ENCODE measurements at regions of chr14 and their contacts with region 1.

Region 1: DNA sequence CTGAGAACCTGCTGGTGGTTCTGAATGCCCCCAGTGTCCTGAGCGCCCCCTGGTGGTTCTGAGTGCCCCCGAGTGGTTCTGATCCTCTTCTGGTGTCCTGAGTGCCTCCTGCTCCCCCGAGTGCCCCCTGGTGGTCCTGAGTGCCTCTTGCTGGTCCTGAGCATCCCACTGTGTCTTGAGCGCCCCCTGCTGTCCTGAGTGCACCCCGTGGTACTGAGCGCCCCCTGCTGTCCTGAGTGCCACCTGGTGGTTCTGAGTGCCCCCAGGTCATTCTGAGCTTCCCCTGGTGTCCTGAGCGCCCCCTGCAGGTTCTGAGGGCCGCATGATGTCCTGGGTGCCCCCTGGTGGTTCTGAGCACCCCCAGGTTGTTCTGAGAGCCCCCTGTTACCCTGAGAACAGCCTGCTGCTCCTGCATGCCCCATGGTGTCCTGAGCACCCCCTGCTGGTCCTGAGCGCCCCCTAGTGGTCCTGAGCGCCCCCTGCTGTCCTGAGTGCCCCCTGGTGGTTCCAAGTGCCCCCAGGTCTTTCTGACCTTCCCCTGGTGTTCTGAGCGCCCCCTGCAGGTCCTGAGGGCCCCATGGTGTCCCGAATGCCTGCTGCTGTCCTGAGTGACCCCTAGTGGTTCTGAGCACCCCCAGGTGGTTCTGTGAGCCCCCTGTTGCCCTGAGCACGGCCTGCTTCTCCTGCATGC is 1165.4 kb downstream of the TMEM121 start:
- DNase-seq: peak; percentile 79
- ATAC-seq: peak; percentile 88
- H3K4me3 ChIP-seq: no peak overlapping the region
- H3K27ac ChIP-seq: no peak overlapping the region
- H3K4me1 ChIP-seq: peaks cover 6% of the 10 kb centered on the region
- H3K27me3 ChIP-seq: peaks cover 0 to 4% of the 10 kb centered on the region in 2 experiments; a peak in 1 of 4 replicates
- CTCF ChIP-seq: peak; percentile 91 to 100 (median 100)
- EP300 ChIP-seq: no peak
- POLR2A ChIP-seq: no peak
- RAD21 ChIP-seq: peak; percentile 55; the same call in 1 of the 2 replicates

Region 2: GRCh38 chr14:106631879-106632278 is 59.9 kb before region 1 on chr14:
- CTCF ChIA-PET with region 1: no interaction called
- POLR2A ChIA-PET with region 1: no interaction called
- RAD21 ChIA-PET with region 1: no interaction called
- SMC1A ChIA-PET with region 1: no interaction called
- in situ Hi-C with region 1: no loop called
- intact Hi-C with region 1: no loop called
- DNase-seq: no peak
- ATAC-seq: no peak
- H3K4me3 ChIP-seq: no peak overlapping the region
- H3K27ac ChIP-seq: no peak overlapping the region
- H3K4me1 ChIP-seq: no peaks in the 10 kb centered on the region
- H3K27me3 ChIP-seq: no peaks in the 10 kb centered on the region; a peak in 2 of 4 replicates
- CTCF ChIP-seq: no peak
- EP300 ChIP-seq: no peak
- POLR2A ChIP-seq: no peak
- RAD21 ChIP-seq: no peak

Region 3: DNA sequence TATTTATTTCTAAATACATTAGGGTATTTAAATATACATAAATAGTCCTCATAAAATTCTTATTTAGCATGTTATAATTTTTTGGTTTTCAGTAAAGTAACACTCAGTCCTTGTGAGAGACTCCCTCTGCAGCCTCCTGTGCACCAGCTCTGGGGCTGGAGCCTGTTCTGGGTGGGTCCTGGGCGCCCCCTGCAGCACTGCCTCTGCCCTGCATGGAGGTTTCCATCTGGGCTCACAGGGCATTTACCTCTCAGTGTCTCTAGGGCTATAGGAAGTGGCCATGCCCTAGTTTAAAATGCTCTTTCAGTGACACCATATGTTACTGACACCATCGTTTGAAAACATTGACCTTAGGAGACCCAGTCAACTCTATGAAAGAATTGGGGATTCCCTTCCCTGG is 10.2 kb before region 1 on chr14:
- CTCF ChIA-PET with region 1: interaction called, 53 read pairs
- POLR2A ChIA-PET with region 1: no interaction called
- RAD21 ChIA-PET with region 1: no interaction called
- SMC1A ChIA-PET with region 1: no interaction called
- in situ Hi-C with region 1: no loop called
- intact Hi-C with region 1: no loop called
- DNase-seq: no peak
- ATAC-seq: peak; percentile 99
- H3K4me3 ChIP-seq: no peak overlapping the region
- H3K27ac ChIP-seq: no peak overlapping the region
- H3K4me1 ChIP-seq: no peaks in the 10 kb centered on the region
- H3K27me3 ChIP-seq: peaks cover 0 to 5% of the 10 kb centered on the region in 2 experiments; a peak in 2 of 4 replicates
- CTCF ChIP-seq: peak; percentile 13 to 44 (median 44); a peak in 5 of 6 replicates
- EP300 ChIP-seq: no peak
- POLR2A ChIP-seq: no peak
- RAD21 ChIP-seq: no peak

Region 4: GRCh38 chr14:106729551-106729950 is 37.8 kb after region 1 on chr14:
- CTCF ChIA-PET with region 1: no interaction called
- POLR2A ChIA-PET with region 1: no interaction called
- RAD21 ChIA-PET with region 1: no interaction called
- SMC1A ChIA-PET with region 1: no interaction called
- in situ Hi-C with region 1: no loop called
- intact Hi-C with region 1: no loop called
- DNase-seq: no peak
- ATAC-seq: no peak
- H3K4me3 ChIP-seq: no peak overlapping the region
- H3K27ac ChIP-seq: no peak overlapping the region
- H3K4me1 ChIP-seq: no peaks in the 10 kb centered on the region
- H3K27me3 ChIP-seq: no peaks in the 10 kb centered on the region
- CTCF ChIP-seq: no peak
- EP300 ChIP-seq: no peak
- POLR2A ChIP-seq: no peak
- RAD21 ChIP-seq: no peak

Region 5: DNA sequence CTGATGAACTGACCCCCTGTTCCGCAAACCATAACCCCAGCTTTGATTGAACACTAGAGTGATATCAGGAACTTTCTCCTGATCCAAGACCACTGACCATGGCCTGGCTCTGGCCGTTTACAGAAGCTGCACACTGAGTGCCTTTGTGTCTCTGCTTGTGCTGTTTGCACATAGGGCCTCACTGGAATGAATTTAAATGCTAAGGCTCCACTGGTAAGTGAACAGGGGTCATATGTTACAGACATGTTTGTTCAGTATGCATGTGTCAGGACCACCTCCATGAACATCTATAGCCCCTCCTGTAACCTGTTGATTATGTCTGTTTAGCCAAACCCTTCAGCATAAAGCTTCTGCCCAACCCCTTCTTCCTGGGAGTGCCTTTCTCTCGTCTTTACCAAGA is 74.4 kb after region 1 on chr14:
- CTCF ChIA-PET with region 1: interaction called, 12 read pairs
- POLR2A ChIA-PET with region 1: no interaction called
- RAD21 ChIA-PET with region 1: no interaction called
- SMC1A ChIA-PET with region 1: interaction called, 3 read pairs
- in situ Hi-C with region 1: no loop called
- intact Hi-C with region 1: no loop called
- DNase-seq: no peak
- ATAC-seq: no peak
- H3K4me3 ChIP-seq: no peak overlapping the region
- H3K27ac ChIP-seq: no peak overlapping the region
- H3K4me1 ChIP-seq: peaks cover 14% of the 10 kb centered on the region
- H3K27me3 ChIP-seq: no peaks in the 10 kb centered on the region
- CTCF ChIP-seq: no peak
- EP300 ChIP-seq: no peak
- POLR2A ChIP-seq: no peak
- RAD21 ChIP-seq: no peak

Measured in GM12878 (cell line).